Calu3 (cell line): ENCODE measurements at regions of chr4 and their contacts with region 1.

Region 1: GRCh38 chr4:86223472-86223871 is 136.4 kb downstream of the MAPK10 start:
- DNase-seq: peak; percentile 49
- H3K4me3 Mint-ChIP-seq: no peak overlapping the region
- H3K27ac Mint-ChIP-seq: no peak overlapping the region
- H3K4me1 Mint-ChIP-seq: peaks cover 17% of the 10 kb centered on the region
- H3K27me3 Mint-ChIP-seq: no peaks in the 10 kb centered on the region
- CTCF ChIP-seq: peak; percentile 70

Region 2: DNA sequence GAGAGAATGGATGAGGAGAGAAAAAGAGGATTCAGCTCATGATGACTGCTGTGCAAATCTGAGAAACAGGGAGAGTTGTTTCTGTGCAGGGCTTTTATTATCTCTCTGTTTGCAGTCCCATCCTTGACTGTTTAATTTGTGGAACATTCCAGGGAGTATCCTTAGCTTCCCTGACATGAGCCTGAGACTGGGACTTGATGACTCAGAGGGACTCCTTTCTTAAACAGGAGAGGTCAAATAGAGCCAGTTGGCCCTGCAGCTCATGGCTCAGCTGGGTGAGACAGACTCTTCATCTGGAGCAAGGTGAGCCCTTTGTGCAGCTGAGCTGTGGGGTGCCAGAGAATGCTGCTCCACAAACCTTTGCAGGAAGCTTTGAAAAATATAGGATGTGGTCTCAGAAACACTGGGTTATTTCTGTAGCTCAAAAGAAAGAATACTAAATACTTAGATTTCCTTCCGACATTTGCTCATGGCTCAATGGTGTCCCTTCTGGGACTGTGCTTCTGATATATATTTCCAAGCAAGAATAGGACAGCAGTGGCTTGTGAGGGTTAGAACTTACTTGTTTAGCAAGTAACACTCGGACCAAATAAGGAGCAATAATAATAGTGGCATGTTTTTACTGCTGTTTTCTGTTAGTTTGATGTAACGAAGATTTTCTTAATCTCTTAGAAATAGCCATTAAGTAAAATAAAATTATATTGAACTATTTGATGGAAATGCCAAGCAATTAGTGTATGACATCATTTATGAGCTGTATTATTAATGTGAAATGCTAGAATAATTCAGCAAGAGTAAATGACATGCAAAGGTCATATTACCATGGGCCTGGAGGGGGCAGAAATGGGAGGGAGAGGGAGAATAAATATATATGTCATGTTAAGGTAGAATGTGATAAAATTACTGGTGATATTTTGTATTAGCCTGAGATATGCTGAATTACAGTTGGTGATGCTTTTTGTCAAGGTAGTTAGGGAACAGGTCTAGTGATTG is 733.9 kb before region 1 on chr4:
- CTCF ChIA-PET with region 1: no interaction called
- intact Hi-C with region 1: no loop called
- DNase-seq: no peak
- H3K4me3 Mint-ChIP-seq: no peak overlapping the region
- H3K27ac Mint-ChIP-seq: no peak overlapping the region
- H3K4me1 Mint-ChIP-seq: no peaks in the 10 kb centered on the region
- H3K27me3 Mint-ChIP-seq: no peaks in the 10 kb centered on the region
- CTCF ChIP-seq: no peak

Region 3: DNA sequence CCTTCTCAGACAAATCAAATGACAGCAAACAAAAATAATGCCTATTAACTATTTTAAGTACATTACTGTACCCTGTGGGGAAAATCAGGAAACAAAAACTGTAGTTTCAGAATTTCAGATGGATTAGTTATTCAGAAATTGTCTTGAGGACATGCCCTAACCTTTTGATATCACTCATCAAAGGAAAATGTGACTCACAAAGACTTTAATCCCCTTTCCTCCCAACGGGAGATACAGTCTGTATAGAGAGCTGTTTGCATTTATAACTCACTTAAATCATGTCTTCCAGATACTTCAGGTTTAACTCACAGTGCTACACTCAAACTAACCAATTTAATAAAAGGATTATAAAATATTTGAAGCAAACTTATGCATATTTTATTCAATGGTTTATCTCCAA is 167.6 kb before region 1 on chr4:
- CTCF ChIA-PET with region 1: no interaction called
- intact Hi-C with region 1: loop called (anchors 10 kb)
- DNase-seq: no peak
- H3K4me3 Mint-ChIP-seq: no peak overlapping the region
- H3K27ac Mint-ChIP-seq: no peak overlapping the region
- H3K4me1 Mint-ChIP-seq: no peaks in the 10 kb centered on the region
- H3K27me3 Mint-ChIP-seq: no peaks in the 10 kb centered on the region
- CTCF ChIP-seq: no peak

Region 4: GRCh38 chr4:86181585-86181984 is 41.9 kb before region 1 on chr4:
- CTCF ChIA-PET with region 1: no interaction called
- intact Hi-C with region 1: loop called (anchors 5 kb)
- DNase-seq: no peak
- H3K4me3 Mint-ChIP-seq: peak overlapping the region; percentile 36
- H3K27ac Mint-ChIP-seq: no peak overlapping the region
- H3K4me1 Mint-ChIP-seq: peaks cover 20% of the 10 kb centered on the region
- H3K27me3 Mint-ChIP-seq: no peaks in the 10 kb centered on the region
- CTCF ChIP-seq: no peak